ENCODE measurements at regions of chr7 and their contacts with region 1.

Region 1: GRCh38 chr7:1432411-1433082 is 26.7 kb downstream of the MICALL2 start:
- DNase-seq: peak; percentile 87
- H3K4me3 Mint-ChIP-seq: no peak overlapping the region
- H3K27ac Mint-ChIP-seq: no peak overlapping the region
- H3K4me1 Mint-ChIP-seq: peaks cover 3% of the 10 kb centered on the region
- H3K27me3 Mint-ChIP-seq: peaks cover 2% of the 10 kb centered on the region

Region 2: DNA sequence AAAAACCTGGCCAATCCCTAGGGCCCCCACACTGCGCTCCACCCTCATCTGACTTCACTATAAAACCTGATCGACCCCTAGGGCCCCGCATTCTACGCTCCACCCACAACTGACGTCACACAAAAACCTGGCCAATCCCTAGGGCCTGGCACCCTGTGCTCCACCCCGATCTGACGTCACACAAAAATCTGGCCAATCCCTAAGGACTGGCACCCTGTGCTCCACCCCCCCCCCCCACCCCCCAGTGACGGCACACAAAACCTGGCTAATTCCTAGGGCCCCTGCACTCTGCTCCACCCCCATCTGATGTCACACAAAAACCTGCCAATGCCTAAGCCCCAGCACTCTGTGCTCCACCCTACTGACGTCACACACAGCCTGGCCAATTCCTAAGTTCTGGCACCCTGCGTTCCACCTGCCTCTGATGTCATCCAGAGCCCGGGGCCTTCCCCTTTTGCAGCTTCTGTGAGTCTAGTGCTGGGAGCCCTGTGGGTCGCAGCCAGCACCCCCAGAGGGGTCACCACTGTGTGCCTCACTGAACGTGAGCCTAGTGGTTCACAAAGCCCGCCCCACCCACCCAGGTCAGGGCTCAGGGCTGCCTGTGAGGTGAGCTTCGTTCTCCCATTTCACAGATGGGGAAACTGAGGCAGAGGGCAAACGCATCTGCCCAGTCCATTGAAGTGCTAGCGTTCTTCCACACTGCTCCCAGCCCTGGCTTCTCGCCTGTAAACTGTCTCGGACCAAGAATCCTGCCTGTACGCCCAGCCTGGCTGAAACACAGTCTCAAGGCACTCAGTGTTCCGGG is 13.8 kb before region 1 on chr7:
- CTCF ChIA-PET with region 1: interaction called, 22 read pairs
- intact Hi-C with region 1: loop called (anchors 1 kb)
- DNase-seq: no peak
- H3K4me3 Mint-ChIP-seq: no peak overlapping the region
- H3K27ac Mint-ChIP-seq: peak overlapping the region; percentile 41
- H3K4me1 Mint-ChIP-seq: peaks cover 17% of the 10 kb centered on the region
- H3K27me3 Mint-ChIP-seq: peaks cover 2% of the 10 kb centered on the region

Region 3: GRCh38 chr7:1473864-1474512 is 41.4 kb after region 1 on chr7:
- CTCF ChIA-PET with region 1: no interaction called
- intact Hi-C with region 1: loop called (anchors 5 kb)
- DNase-seq: peak; percentile 93
- H3K4me3 Mint-ChIP-seq: no peak overlapping the region
- H3K27ac Mint-ChIP-seq: no peak overlapping the region
- H3K4me1 Mint-ChIP-seq: peaks cover 10% of the 10 kb centered on the region
- H3K27me3 Mint-ChIP-seq: no peaks in the 10 kb centered on the region

Region 4: DNA sequence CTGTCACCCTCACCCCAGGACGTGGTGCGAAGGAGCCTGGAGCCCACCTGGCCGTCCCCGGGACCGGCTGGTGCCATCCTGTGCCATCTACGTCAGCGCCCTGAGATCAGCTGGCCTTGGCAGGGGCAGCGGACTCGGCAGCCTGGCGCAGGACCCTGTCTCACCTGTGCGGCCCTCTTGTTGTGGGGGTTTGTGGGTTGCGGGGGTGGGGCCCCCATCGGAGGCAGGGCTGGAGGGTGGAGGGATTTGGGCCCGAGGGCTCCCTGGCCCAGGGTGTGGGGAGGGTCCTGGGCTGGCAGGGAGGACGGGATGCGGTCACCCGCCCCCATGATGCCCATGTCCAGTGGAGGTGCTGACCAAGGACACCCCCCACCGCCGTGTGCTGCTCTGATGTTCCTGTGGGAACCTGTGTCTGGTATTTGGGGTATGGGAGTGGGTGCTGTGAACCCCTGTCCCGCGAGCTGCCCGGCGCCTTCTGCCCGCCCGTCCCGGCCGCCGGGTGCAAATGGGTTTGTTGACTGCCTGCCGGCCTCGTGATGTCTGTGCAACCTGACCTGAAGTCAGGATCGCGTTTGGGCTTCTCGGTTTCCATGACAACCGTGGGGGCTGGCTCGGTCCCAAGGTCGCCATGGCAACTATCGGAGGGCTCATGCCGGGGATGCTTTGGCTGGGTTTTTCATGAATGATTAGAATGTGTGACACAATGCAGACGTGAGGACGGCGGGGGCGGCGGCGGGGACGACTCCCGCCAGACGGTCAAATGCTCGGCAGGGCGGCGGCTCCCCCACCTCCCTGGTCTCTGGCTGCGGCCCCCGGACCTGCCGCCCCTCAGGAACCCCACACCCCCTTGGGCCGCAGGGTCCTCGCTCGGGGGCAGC is 105.2 kb after region 1 on chr7:
- CTCF ChIA-PET with region 1: no interaction called
- intact Hi-C with region 1: no loop called
- DNase-seq: no peak
- H3K4me3 Mint-ChIP-seq: no peak overlapping the region
- H3K27ac Mint-ChIP-seq: no peak overlapping the region
- H3K4me1 Mint-ChIP-seq: peaks cover 12% of the 10 kb centered on the region
- H3K27me3 Mint-ChIP-seq: no peaks in the 10 kb centered on the region